HEK293 (cell line): ENCODE measurements at regions of chr5 and their contacts with region 1.

Region 1: DNA sequence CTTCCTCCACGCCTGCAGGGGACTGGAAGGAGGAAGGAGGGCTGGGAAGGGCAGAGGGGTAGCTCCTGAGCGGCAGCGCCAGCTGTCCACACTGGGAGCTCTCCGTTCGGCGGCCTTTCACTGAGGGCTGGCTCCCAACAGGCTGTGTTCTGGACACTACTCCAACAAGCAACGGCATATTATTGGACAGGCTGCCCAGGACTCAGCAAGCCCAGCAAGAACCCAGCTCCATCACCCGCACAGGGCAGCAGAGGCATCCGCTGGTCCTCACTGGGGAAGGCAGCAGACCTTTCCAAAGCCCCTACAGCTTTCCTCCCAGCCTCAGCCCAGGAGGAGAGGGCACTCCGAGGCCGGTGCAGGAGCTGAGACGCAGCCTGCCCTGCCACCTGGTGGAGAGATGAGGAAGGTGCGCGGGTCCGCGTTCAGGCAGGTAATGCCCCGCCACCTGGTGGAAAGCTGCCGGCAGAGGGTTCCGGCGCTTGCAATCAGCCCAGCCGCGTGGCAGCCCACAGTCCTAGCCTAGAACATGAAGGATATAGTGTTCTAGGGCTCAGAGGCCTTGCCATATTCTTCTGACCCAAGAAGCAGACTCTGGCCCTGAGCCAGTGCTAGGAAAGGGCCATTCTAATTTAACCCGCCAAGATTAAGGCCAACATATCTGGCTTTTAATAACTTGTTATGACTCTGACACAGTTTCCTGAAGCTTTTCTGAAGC is 74.4 kb downstream of the NRG2 start:
- H3K4me3 ChIP-seq: no peak overlapping the region
- H3K27ac ChIP-seq: no peak overlapping the region
- H3K4me1 ChIP-seq: no peaks in the 10 kb centered on the region; the same call in 1 of the 2 replicates
- CTCF ChIP-seq: peak; percentile 100

Region 2: GRCh38 chr5:139795074-139796001 is 173.4 kb before region 1 on chr5 and contains the start of gene PSD2:
- CTCF ChIA-PET with region 1: interaction called, 58 read pairs
- POLR2A ChIA-PET with region 1: no interaction called
- H3K4me3 ChIP-seq: peak within 1 kb of the TSS; percentile 25
- H3K27ac ChIP-seq: no peak within 1 kb of the TSS
- H3K4me1 ChIP-seq: no peaks in the 10 kb centered on the region
- CTCF ChIP-seq: no peak

Region 3: GRCh38 chr5:139863855-139864558 is 104.7 kb before region 1 on chr5:
- CTCF ChIA-PET with region 1: interaction called, 85 read pairs
- POLR2A ChIA-PET with region 1: no interaction called
- H3K4me3 ChIP-seq: no peak overlapping the region
- H3K27ac ChIP-seq: no peak overlapping the region
- H3K4me1 ChIP-seq: no peaks in the 10 kb centered on the region
- CTCF ChIP-seq: peak; percentile 49

Region 4: DNA sequence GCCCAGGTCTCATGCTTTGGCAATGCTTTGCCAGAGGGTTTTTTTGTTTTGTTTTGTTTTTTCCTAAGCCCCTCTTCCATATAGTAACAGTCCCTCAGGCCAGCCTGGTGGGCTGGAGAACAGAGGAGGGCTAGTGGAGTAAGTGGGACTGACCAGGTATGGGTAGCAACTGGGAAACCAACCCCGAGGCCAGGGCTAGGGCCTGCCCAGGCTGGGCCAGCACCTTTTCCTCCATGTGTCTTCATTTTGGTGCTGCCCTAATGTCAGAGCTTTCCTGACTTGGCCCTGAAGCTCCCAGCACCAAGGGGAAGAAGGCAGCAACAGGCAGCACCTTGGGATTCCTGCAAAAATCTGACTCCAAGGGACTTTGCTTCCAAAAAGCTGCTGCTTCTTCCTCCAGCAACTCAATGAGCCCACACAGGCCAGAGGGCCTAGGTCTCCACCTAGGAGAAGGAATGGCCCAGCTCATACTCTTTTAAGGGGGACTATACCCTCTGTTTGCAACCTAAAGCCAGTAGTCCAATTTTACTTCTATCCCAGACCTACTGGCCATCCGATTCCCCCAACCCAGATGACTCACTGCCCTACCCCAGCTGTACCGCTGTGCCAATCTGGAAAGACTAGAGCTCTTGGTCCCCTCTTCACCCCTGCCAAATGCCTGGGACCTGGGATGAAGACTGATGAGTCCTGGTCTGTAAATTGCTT is 68.0 kb before region 1 on chr5:
- CTCF ChIA-PET with region 1: interaction called, 25 read pairs
- POLR2A ChIA-PET with region 1: no interaction called
- H3K4me3 ChIP-seq: no peak overlapping the region
- H3K27ac ChIP-seq: no peak overlapping the region
- H3K4me1 ChIP-seq: peaks cover 7% of the 10 kb centered on the region; the same call in 1 of the 2 replicates
- CTCF ChIP-seq: no peak

Region 5: DNA sequence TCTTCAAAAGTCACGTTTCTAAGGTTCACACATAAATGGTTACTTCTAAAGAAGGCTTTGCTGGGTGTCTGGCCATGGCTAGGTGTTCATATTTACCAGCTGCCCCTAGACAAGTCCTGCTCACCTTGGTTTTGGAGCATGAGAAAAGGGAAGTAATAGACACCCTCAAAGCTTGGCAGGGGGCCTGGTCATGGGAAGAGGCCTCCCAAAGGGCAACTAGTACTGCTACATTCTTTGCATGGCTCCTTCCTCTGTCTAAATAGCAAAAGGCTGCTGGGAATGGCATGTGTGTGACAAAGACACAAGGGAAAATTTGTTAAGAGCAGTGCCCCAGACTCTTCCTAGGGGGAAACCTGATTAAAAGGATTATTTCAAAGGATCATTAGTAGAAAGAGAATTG is 19.0 kb before region 1 on chr5:
- CTCF ChIA-PET with region 1: interaction called, 99 read pairs
- POLR2A ChIA-PET with region 1: no interaction called
- H3K4me3 ChIP-seq: no peak overlapping the region
- H3K27ac ChIP-seq: no peak overlapping the region
- H3K4me1 ChIP-seq: no peaks in the 10 kb centered on the region
- CTCF ChIP-seq: no peak

Region 6: GRCh38 chr5:140042643-140043500 is 74.2 kb after region 1 on chr5 and contains the start of gene NRG2:
- CTCF ChIA-PET with region 1: interaction called, 35 read pairs
- POLR2A ChIA-PET with region 1: interaction called, 5 read pairs
- H3K4me3 ChIP-seq: peak within 1 kb of the TSS; percentile 70
- H3K27ac ChIP-seq: peak within 1 kb of the TSS; percentile 79; the same call in 1 of the 2 replicates
- H3K4me1 ChIP-seq: peaks cover 19% of the 10 kb centered on the region
- CTCF ChIP-seq: peak; percentile 100